AG04450 (cell line): ENCODE measurements at regions of chr20 and their contacts with region 1.

Region 1: DNA sequence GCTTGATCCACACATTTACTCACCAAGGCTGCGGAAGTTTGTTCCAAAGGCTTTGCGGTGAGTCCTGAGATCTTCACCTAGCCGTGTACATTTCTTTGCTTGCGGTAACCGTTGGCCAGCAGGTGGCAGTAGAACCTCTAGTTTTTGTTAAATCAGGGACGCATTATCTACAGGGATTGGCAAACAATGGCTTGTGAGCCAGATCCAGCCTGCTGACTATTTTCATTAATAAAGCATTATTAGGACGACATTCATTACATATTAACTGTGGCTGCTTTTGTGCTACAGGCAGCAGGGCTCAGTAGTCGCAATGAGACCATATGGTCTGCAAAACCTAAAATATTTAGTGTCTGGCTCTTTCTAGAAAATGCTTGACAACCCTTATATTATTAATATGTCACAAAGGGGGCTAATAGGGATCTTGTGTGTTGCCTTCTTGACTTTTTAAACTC is 174.1 kb downstream of the DOK5 start:
- DNase-seq: peak; percentile 42
- H3K4me3 ChIP-seq: no peak overlapping the region
- H3K27ac ChIP-seq: no peak overlapping the region
- H3K27me3 ChIP-seq: no peaks in the 10 kb centered on the region
- CTCF ChIP-seq: peak; percentile 84

Region 2: DNA sequence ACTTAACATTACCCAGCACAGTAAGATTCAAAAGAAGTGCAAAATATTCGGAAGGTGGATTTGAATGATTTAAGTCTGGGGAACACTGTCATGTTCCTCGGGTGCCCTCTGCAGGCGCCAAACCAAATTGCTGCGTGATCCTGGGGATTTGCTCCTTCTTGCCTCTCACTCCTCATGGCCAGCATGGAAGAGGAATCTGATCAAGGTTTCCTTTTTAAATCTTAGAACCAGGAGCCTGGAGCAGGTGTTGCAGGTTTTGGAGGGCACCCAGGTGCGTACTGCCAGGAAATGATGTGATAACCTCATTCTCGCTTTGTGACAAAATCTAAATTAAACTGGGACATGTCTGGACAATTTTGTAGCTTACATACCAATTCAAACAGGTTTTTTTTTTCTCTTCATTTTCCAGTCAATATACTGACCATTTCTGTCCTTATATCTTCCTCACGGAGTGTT is 449.8 kb before region 1 on chr20:
- CTCF ChIA-PET with region 1: interaction called, 20 read pairs
- POLR2A ChIA-PET with region 1: no interaction called
- DNase-seq: peak; percentile 56
- H3K4me3 ChIP-seq: no peak overlapping the region
- H3K27ac ChIP-seq: no peak overlapping the region
- H3K27me3 ChIP-seq: peaks cover 12% of the 10 kb centered on the region
- CTCF ChIP-seq: peak; percentile 97

Region 3: DNA sequence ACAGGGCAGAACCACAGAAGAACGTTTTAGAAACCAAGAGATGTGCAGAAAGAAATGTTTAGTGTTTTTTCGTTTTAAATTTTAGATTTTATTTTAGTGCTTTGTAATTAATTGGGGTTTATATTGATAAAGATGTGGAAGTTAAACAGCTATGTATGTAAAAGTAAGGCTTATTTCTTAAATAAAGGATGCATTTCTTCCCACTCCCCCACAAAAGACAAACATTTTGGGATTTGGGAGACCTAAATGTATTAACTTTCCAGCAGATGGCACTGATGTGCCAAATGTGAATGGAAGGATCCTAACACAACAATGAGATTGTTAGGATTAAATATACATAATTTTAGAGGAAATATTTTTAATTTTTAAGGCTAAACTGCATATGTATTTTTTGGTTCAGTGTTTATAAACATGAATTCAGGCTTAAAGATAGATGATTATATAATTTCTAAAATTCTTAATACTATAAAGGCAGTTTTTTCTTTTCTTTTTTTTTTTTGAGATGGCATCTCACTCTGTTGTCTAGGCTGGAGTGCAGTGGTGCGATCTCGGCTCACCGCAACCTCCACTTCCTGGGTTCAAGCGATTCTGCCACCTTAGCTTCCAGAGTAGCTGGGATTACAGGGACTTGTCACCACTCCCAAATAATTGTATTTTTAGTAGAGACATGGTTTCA is 429.6 kb before region 1 on chr20:
- CTCF ChIA-PET with region 1: interaction called, 126 read pairs
- POLR2A ChIA-PET with region 1: interaction called, 3 read pairs
- DNase-seq: no peak
- H3K4me3 ChIP-seq: no peak overlapping the region
- H3K27ac ChIP-seq: no peak overlapping the region
- H3K27me3 ChIP-seq: no peaks in the 10 kb centered on the region
- CTCF ChIP-seq: peak; percentile 69

Region 4: GRCh38 chr20:54268951-54269350 is 380.6 kb before region 1 on chr20:
- CTCF ChIA-PET with region 1: no interaction called
- POLR2A ChIA-PET with region 1: no interaction called
- DNase-seq: no peak
- H3K4me3 ChIP-seq: no peak overlapping the region
- H3K27ac ChIP-seq: no peak overlapping the region
- H3K27me3 ChIP-seq: peaks cover 3% of the 10 kb centered on the region
- CTCF ChIP-seq: no peak

Region 5: DNA sequence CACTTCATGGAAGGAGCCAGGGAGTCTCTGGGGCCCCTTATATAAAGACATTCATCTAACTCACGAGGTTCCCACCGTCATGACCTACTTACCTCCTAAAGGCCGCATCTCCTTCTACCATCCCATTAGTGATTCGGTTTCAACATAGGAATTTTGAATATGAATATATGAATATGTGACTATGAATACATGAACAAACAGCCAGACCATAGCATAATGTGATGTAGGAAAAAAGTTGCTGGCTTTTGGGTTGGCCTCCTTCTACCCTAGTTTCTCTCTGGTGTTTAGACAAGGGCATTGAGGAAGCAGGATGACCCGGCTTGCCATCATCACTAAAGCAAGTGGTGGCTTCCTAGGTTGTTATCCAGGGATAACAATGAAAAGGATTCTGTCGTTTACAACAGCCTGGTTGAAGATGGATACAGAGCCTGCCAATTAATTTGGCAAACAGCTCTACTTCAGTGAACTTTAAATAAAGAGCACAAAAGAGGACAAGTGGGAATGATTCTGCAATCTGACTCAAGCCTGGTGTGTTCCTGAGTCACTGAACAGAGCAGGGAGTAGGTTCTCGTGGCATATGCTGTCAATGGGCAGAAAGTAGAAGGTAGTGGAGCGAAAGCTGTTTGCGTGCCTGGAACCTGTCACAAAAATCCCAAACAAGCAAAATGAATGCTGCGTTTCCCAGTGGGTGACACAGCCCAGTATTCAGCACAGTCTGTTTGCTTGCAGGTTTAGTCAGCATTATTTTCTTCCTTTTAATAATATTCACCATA is 218.2 kb before region 1 on chr20:
- CTCF ChIA-PET with region 1: no interaction called
- POLR2A ChIA-PET with region 1: no interaction called
- DNase-seq: no peak
- H3K4me3 ChIP-seq: no peak overlapping the region
- H3K27ac ChIP-seq: no peak overlapping the region
- H3K27me3 ChIP-seq: no peaks in the 10 kb centered on the region
- CTCF ChIP-seq: no peak

Region 6: DNA sequence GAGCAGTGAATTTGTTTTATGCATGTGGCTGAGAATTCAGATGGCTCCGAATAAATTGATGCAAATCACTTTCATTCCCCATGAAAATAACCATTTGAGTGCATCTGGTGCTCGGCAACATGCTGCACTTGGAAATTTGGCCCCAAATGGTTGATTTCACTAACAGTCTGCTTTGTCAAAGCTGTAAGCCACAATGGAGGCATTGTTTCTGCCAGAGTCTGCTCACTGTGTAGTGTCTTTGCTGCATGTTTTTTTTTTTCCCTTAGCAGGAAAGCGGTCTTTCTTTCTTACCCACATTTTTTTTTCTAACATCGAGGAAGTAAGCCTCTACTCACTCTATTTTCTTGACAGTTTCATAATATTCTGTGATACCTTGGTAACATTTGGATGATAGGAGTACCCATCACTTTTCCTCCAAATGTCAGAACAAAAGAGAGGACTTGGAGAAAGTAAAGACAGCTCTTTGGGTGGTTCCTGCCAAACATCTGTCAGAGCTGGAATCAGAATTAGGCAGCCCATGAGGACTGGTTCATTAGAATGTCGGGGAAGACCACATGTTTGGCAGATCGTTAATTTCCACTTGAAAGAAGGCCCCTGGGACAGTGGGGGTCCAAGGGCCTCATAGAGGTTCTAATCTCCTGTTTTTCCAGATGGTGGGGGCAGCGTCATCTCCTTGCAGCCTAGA is 24.7 kb before region 1 on chr20:
- CTCF ChIA-PET with region 1: no interaction called
- POLR2A ChIA-PET with region 1: no interaction called
- DNase-seq: no peak
- H3K4me3 ChIP-seq: no peak overlapping the region
- H3K27ac ChIP-seq: no peak overlapping the region
- H3K27me3 ChIP-seq: no peaks in the 10 kb centered on the region
- CTCF ChIP-seq: no peak